ENCODE measurements at regions of chr12 and their contacts with region 1.

Region 1: GRCh38 chr12:44930972-44931600 is 55.0 kb upstream of the NELL2 start:
- DNase-seq: no peak
- ATAC-seq: peak; percentile 57
- H3K4me3 Mint-ChIP-seq: no peak overlapping the region
- H3K27ac Mint-ChIP-seq: no peak overlapping the region
- H3K4me1 Mint-ChIP-seq: no peaks in the 10 kb centered on the region
- H3K27me3 Mint-ChIP-seq: peaks cover 3% of the 10 kb centered on the region

Region 2: GRCh38 chr12:43957732-43958372 is 973.2 kb before region 1 on chr12:
- CTCF ChIA-PET with region 1: interaction called, 3 read pairs
- POLR2A ChIA-PET with region 1: no interaction called
- intact Hi-C with region 1: loop called in 1 of 2 experiments (anchors 1 kb)
- DNase-seq: peak; percentile 18
- ATAC-seq: peak; percentile 61
- H3K4me3 Mint-ChIP-seq: no peak overlapping the region
- H3K27ac Mint-ChIP-seq: no peak overlapping the region
- H3K4me1 Mint-ChIP-seq: no peaks in the 10 kb centered on the region
- H3K27me3 Mint-ChIP-seq: no peaks in the 10 kb centered on the region

Region 3: DNA sequence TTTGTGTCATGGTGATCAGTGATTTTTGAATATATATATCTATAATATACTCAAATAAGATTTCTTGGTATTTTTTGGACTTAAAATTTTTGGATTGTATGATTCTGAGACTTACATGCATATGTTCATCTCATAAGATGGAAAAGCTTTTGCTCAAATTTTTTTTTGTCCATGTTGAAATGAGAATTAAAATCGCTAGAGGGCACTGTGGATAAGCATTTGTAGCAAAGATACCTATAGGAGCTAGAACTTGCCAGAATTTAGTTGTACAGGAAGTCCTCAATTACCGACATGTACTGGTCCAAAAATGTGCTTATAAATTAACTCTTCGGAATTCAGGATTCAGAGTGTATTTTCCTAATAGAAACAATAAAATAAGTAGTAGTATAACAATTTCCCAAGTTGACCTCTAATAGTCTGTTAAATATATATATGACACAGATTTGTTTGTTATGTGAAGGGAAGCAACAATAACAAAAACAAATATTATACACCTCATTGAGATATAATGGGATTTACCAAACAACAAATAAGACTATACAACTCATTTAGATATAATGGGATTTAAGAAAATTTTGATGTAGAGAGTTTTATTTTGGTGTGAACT is 915.6 kb before region 1 on chr12:
- CTCF ChIA-PET with region 1: interaction called, 30 read pairs
- POLR2A ChIA-PET with region 1: no interaction called
- intact Hi-C with region 1: loop called (anchors 1 kb)
- DNase-seq: no peak
- ATAC-seq: no peak
- H3K4me3 Mint-ChIP-seq: no peak overlapping the region
- H3K27ac Mint-ChIP-seq: no peak overlapping the region
- H3K4me1 Mint-ChIP-seq: no peaks in the 10 kb centered on the region
- H3K27me3 Mint-ChIP-seq: no peaks in the 10 kb centered on the region

Region 4: DNA sequence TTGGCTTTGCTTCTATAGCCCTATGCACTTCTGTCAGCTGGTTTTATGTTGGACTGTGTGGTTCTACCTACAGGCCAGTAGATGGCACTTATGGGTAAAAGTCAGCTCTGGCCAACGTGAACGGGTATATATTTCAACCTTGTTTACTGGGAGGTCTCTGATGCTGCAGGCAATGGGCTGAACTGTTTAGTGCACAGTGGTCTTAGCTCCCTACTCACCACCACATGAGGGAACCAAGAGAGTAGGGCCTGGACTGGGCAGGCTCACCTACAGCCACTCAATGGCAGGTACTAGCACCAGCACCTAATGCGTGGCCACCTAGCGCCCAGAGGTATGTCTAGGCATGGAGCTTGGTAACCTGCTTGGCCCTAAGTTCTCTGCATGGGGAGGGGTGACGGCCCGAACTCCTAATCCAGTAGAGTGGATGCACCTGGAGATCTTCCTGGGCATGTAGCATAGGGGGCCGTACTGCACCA is 613.4 kb before region 1 on chr12:
- CTCF ChIA-PET with region 1: interaction called, 3 read pairs
- POLR2A ChIA-PET with region 1: no interaction called
- intact Hi-C with region 1: loop called (anchors 1 to 2 kb)
- DNase-seq: peak; percentile 7
- ATAC-seq: peak; percentile 72
- H3K4me3 Mint-ChIP-seq: no peak overlapping the region
- H3K27ac Mint-ChIP-seq: no peak overlapping the region
- H3K4me1 Mint-ChIP-seq: no peaks in the 10 kb centered on the region
- H3K27me3 Mint-ChIP-seq: no peaks in the 10 kb centered on the region

Region 5: DNA sequence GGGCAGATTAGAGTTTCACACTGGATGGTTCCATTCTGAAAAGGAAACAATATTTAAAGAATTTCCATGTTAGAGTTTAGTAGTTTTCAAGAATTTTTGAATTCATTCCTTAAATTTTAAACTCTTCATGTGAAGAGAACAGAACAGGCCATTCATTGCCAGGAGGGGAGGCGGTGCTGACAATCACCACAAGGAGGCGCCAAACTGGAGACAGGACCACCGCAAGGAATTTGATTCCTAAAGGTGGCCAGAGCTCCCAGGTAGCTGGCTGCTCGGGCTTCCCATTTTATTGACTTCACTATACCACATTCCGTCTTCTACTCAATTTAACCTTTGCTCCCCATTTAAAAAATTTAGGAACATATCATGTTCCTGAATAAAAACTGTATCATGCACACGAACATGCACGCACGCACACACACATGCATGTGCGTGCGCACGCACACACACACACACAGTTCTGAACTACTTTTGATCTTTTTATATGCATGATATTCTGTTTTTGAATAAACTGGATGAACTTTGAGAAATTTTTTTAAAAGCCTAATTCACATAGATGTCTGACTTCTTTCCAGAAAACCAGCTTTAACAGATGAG is 156.2 kb before region 1 on chr12:
- CTCF ChIA-PET with region 1: interaction called, 42 read pairs
- POLR2A ChIA-PET with region 1: no interaction called
- intact Hi-C with region 1: loop called (anchors 1 kb)
- DNase-seq: peak; percentile 78
- ATAC-seq: no peak
- H3K4me3 Mint-ChIP-seq: no peak overlapping the region
- H3K27ac Mint-ChIP-seq: no peak overlapping the region
- H3K4me1 Mint-ChIP-seq: no peaks in the 10 kb centered on the region
- H3K27me3 Mint-ChIP-seq: no peaks in the 10 kb centered on the region

Region 6: DNA sequence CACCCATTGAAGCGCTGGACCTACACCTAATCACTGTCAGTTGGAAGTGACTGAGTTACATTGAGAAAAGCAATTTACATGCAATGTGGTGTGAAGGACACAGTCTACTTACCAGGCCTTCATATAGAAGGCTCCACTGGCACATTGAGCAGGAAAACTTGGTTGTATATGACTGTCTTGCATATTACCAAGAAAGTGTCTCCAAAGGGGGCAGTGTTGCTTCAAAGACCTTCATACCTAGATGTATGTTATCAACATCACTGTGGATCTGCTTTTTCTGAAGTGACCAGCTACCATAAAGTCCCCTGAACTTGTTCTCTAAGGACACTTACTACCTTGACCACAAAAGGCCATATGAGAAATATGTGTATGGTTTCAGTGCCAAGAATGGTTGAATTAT is 119.0 kb before region 1 on chr12:
- CTCF ChIA-PET with region 1: interaction called, 50 read pairs
- POLR2A ChIA-PET with region 1: interaction called, 3 read pairs
- intact Hi-C with region 1: loop called (anchors 1 to 2 kb)
- DNase-seq: peak; percentile 51
- ATAC-seq: peak; percentile 84
- H3K4me3 Mint-ChIP-seq: no peak overlapping the region
- H3K27ac Mint-ChIP-seq: no peak overlapping the region
- H3K4me1 Mint-ChIP-seq: peaks cover 32% of the 10 kb centered on the region
- H3K27me3 Mint-ChIP-seq: no peaks in the 10 kb centered on the region

Region 7: GRCh38 chr12:44942714-44943113 is 11.6 kb after region 1 on chr12:
- CTCF ChIA-PET with region 1: interaction called, 10 read pairs
- POLR2A ChIA-PET with region 1: no interaction called
- intact Hi-C with region 1: no loop called
- DNase-seq: no peak
- ATAC-seq: no peak
- H3K4me3 Mint-ChIP-seq: no peak overlapping the region
- H3K27ac Mint-ChIP-seq: no peak overlapping the region
- H3K4me1 Mint-ChIP-seq: no peaks in the 10 kb centered on the region
- H3K27me3 Mint-ChIP-seq: no peaks in the 10 kb centered on the region